ENCODE measurements at regions of chr2 and their contacts with region 1.

Region 1: GRCh38 chr2:169928463-169928864 is 101.2 kb downstream of the UBR3 start:
- H3K4me3 Mint-ChIP-seq: no peak overlapping the region
- H3K27ac Mint-ChIP-seq: no peak overlapping the region
- H3K4me1 Mint-ChIP-seq: no peaks in the 10 kb centered on the region
- H3K27me3 Mint-ChIP-seq: no peaks in the 10 kb centered on the region

Region 2: GRCh38 chr2:169446452-169446851 is 482.0 kb before region 1 on chr2:
- intact Hi-C with region 1: loop called (anchors 10 kb)
- H3K4me3 Mint-ChIP-seq: no peak overlapping the region
- H3K27ac Mint-ChIP-seq: no peak overlapping the region
- H3K4me1 Mint-ChIP-seq: no peaks in the 10 kb centered on the region
- H3K27me3 Mint-ChIP-seq: peaks cover 2% of the 10 kb centered on the region

Region 3: GRCh38 chr2:169562519-169562918 is 365.9 kb before region 1 on chr2:
- intact Hi-C with region 1: loop called (anchors 10 kb)
- H3K4me3 Mint-ChIP-seq: no peak overlapping the region
- H3K27ac Mint-ChIP-seq: no peak overlapping the region
- H3K4me1 Mint-ChIP-seq: no peaks in the 10 kb centered on the region
- H3K27me3 Mint-ChIP-seq: no peaks in the 10 kb centered on the region

Region 4: DNA sequence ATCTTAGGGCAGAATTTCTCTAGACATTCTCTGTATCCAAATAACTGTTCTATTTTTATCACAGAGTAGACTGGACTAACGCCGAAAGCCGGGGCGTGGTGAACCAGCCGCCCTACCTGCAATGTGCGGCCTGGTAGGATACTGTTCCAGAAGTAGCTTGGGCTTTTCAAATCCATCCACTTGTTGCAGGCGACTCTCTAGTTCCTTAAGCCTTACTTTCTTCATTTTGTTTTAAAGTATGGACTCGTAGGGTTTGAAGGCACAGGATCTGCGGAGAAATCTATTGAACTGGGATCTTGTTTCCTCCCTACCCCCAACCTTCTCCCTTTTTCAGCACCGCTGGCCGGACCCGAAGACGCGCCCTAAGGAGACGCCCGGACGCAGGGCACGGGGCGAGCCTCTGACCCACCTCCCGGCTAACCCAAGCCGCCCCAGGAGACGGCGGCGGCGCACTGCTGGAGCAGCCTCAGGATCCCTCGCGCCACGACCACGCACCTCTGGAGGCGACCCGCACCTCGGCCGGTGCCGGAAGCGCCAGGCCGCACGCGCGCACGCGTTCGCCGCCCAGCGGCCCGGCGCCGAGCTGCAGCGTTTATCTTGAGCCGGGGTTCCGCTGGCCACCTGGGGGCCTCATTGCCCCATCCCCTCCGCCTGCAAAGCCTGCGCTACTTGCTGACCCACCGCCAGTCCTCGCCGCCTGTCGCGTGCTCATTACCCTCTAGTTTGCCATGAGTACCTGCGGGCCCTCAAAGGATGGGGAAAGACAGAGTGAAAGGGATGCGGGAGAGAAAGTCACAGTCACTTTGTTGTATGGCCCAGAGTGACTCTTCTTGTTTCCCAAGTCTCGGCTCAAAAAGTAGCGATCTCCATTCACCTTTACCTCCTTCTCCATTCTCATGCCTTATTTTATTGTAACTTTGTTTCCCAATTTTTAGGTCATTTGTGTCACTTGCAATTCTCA is 103.8 kb before region 1 on chr2 and contains the start of gene METTL5:
- intact Hi-C with region 1: loop called (anchors 1 kb)
- H3K4me3 Mint-ChIP-seq: peak within 1 kb of the TSS; percentile 91
- H3K27ac Mint-ChIP-seq: peak within 1 kb of the TSS; percentile 90
- H3K4me1 Mint-ChIP-seq: peaks cover 40% of the 10 kb centered on the region
- H3K27me3 Mint-ChIP-seq: peaks cover 3% of the 10 kb centered on the region

Region 5: DNA sequence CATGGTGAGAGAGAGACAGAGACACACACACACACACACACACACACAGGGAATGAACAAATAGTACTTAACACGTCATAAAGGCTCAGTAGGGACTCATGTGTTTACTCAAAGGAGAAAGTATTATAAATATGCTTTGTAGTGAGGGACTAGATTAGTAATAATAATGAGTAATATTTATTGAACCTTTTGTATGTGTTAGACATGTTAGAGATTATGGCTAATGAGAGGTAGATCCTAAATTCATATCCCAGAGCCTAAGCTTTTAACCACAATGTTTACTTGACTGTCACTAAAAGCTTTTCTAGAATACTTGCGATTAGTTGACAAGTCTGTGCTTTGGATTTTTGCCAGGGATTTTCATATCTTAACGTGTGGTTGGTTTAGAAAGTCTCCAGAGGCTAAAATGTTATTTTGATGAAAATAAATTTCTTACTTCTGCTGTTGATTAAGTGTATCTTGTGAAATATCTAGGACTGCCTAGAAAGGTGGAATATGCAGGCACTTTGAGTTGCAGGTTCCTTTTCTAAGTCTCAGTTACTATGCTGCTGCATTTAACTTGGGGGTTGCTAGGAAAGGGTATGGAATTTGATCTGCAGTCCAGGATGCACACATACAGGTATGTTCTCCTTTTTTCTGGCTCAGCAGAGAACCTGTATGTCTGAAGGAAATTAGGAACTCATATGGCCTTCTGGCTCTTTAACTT is 36.7 kb before region 1 on chr2:
- intact Hi-C with region 1: no loop called
- H3K4me3 Mint-ChIP-seq: no peak overlapping the region
- H3K27ac Mint-ChIP-seq: no peak overlapping the region
- H3K4me1 Mint-ChIP-seq: no peaks in the 10 kb centered on the region
- H3K27me3 Mint-ChIP-seq: no peaks in the 10 kb centered on the region

Measured in dendritic cell treated with granulocyte-macrophage colony-stimulating factor and Interleukin-4, amounts not matched to agents 40 ng/mL and 50 ng/mL, for 4 days (primary cell).